Heart left ventricle (tissue), 16 donors: ENCODE measurements at regions of chrX and their contacts with region 1.

Region 1: DNA sequence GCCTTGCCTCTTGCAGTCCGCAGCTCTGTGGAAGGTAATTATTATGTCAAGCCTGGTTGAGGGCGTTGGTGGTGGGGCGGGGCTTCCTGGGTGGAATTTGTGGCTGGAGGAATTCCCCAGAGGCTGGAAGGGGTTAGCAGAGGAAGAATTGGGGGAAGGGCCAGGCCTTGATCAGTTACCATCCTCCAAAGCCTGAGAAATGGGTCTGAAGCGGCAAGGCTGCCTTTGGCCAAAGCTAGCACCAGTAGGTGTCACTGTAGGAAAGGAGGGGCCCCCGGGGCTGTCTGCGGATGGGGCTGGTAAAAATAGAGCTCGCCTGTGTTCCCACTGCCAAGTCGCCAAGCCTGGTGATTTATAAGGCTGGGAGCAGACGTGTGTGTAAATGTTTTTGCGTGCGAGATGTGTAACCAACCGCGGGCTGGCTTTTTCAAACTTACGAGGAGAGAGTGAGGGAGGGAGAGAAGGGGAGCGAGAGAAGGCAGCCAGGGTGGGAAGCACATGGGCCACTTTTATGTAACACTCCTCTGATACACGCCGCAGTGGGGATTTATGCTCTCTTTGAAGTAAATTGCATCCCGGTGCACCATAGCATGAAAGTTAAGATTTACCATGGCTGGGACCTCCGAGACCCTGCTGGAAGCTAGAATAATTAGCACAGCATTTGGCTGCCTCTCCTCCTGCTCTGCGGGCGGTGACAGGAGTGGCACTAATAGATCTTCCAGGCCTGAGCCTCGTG is 366.9 kb downstream of the BCOR start:
- DNase-seq: peak; percentile 64 to 78 (median 77)
- ATAC-seq: peak; percentile 69 to 90 (median 82)
- H3K4me3 ChIP-seq: no peak overlapping the region
- H3K27ac ChIP-seq: peak overlapping the region in 5 of 12 donors; percentile 34 to 48 (median 38)
- H3K4me1 ChIP-seq: peaks cover 0 to 29% (median 10%) of the 10 kb centered on the region in 12 donors
- H3K27me3 ChIP-seq: peaks cover 0 to 35% (median 0%) of the 10 kb centered on the region in 9 donors
- CTCF ChIP-seq: peak; percentile 36 to 71 (median 58)
- POLR2A ChIP-seq: no peak

Region 2: DNA sequence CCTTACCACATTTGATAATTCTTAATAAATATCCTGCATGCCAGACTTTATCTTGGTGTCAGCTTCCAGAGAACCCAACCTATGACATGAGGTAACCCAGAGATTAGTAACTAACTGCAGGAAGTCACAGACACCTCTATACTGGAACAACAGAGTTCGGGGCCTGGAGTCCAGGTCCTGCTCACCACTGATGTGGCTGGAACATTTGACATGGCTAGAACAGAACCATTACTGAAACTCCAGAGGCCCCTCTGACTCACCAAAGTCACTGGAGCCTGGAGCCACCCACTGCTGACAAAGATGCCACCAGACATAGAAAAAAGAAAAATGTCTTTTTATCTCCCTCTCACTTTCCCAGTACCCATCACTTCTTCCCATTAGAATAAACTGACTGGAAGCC is 525.9 kb before region 1 on chrX:
- intact Hi-C with region 1: no loop called
- DNase-seq: no peak
- ATAC-seq: no peak
- H3K4me3 ChIP-seq: no peak overlapping the region
- H3K27ac ChIP-seq: no peak overlapping the region
- H3K4me1 ChIP-seq: no peaks in the 10 kb centered on the region
- H3K27me3 ChIP-seq: peaks cover 0 to 30% (median 0%) of the 10 kb centered on the region in 9 donors
- CTCF ChIP-seq: no peak
- POLR2A ChIP-seq: no peak

Region 3: DNA sequence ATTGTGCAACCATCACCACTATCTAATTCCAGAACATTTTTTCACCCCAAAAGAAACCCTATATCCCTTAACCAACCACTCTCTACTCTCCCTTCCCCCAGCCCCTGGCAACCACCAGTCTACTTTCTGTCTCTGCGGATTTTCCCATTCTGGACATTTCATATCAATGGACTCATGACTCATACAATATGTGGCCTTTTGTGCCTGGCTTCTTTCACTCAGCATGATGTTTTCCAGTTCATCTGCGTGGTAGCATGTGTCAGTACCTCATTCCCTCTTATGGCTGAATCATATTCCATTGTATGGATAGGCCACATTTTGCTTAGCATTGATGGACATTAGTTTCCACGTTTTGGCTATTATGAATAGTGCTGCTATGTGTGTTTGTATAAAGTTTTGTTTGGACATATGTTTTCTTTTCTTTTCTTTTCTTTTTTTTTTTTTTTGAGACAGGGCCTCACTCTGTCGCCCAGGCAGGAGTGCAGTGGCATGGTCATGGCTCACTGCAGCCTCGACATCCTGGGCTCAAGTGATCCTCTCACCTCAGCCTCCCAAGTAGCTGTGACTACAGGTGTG is 31.5 kb after region 1 on chrX:
- intact Hi-C with region 1: no loop called
- DNase-seq: no peak
- ATAC-seq: peak in 2 of 4 donors; percentile 41 to 43
- H3K4me3 ChIP-seq: no peak overlapping the region
- H3K27ac ChIP-seq: no peak overlapping the region
- H3K4me1 ChIP-seq: peaks cover 0 to 23% (median 2%) of the 10 kb centered on the region in 12 donors
- H3K27me3 ChIP-seq: peaks cover 0 to 6% (median 0%) of the 10 kb centered on the region in 9 donors
- CTCF ChIP-seq: no peak
- POLR2A ChIP-seq: no peak

Region 4: GRCh38 chrX:39808471-39808917 is 77.7 kb after region 1 on chrX:
- intact Hi-C with region 1: loop called in 5 of 10 experiments (anchors 5 to 10 kb)
- DNase-seq: peak in 2 of 5 donors; percentile 20 to 22
- ATAC-seq: peak in 3 of 4 donors; percentile 31 to 77 (median 56)
- H3K4me3 ChIP-seq: no peak overlapping the region
- H3K27ac ChIP-seq: peak overlapping the region in 5 of 12 donors; percentile 13 to 59 (median 42)
- H3K4me1 ChIP-seq: peaks cover 0 to 15% (median 4%) of the 10 kb centered on the region in 12 donors
- H3K27me3 ChIP-seq: peaks cover 0 to 9% (median 0%) of the 10 kb centered on the region in 9 donors
- CTCF ChIP-seq: no peak
- POLR2A ChIP-seq: no peak

Region 5: GRCh38 chrX:40097497-40098263 is 366.9 kb after region 1 on chrX and contains the start of gene BCOR:
- intact Hi-C with region 1: loop called in 3 of 10 experiments (anchors 5 to 10 kb)
- DNase-seq: peak; percentile 77 to 86 (median 82)
- ATAC-seq: peak in 3 of 4 donors; percentile 28 to 66 (median 59)
- H3K4me3 ChIP-seq: peak within 1 kb of the TSS; percentile 63 to 98 (median 78)
- H3K27ac ChIP-seq: peak within 1 kb of the TSS; percentile 84 to 97 (median 90)
- H3K4me1 ChIP-seq: peaks cover 0 to 63% (median 9%) of the 10 kb centered on the region in 12 donors
- H3K27me3 ChIP-seq: peaks cover 0 to 92% (median 0%) of the 10 kb centered on the region in 9 donors
- CTCF ChIP-seq: no peak
- POLR2A ChIP-seq: peak in 1 of 2 donors; percentile 83
- total RNA-seq, gene BCOR: 11.3 to 40.1 (median 19.5) TPM

Region 6: DNA sequence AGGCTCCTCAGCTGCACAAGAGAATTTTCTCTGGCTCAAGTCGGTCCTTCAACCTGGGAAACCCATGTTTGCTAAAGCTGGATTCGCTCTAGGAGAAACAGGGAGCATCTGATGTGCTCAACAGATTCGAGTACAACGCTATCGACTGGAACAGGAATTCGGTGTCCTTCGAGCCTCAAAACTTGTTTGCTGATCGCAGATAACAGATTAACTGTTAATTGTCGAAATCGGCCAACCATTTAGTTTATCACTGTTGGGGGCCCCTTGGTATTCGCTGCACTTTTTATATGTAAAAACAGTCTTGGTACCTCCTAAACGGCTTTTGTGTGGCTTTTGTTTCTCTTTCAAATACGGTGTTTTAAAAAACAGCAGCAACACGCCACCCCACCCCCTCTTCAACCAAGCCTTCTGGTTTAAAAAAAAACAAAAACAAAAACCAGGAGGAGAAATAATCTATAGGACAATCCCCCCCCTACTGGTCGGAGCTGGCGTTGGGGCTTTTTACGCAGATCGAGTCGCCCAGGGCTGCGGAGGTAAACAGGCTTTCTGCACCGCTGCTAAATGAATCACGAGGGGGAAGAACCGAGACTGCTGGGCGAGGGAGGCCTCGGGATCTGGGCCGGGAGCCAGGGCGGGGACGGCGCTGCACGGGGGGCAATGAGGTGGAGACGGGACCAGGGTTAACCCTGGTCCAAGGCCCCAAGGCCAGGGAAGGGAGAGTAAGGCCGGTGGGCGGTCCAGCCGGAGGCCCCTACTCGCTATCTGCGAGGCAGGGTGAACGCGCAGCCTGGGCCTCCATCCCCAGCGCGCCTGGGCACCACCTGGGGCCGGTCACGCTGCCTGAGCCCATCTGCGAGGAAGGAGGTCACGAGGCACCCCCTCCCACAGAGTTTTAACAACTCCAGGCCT is 438.6 kb after region 1 on chrX:
- intact Hi-C with region 1: loop called in 3 of 10 experiments (anchors 10 kb)
- DNase-seq: peak in 4 of 5 donors; percentile 34 to 75 (median 46)
- ATAC-seq: no peak
- H3K4me3 ChIP-seq: peak overlapping the region in 2 of 12 donors; percentile 19 to 43
- H3K27ac ChIP-seq: peak overlapping the region in 2 of 12 donors; percentile 74 to 76
- H3K4me1 ChIP-seq: peaks cover 0 to 56% (median 19%) of the 10 kb centered on the region in 12 donors
- H3K27me3 ChIP-seq: peaks cover 0 to 81% (median 0%) of the 10 kb centered on the region in 9 donors
- CTCF ChIP-seq: peak in 8 of 12 donors; percentile 15 to 35 (median 23)
- POLR2A ChIP-seq: no peak